Left ventricle myocardium inferior (tissue), 1 donor: ENCODE measurements at regions of chr9 and their contacts with region 1.

Region 1: GRCh38 chr9:131277910-131278701 is 1.8 kb upstream of the FAM78A start:
- DNase-seq: peak; percentile 89
- H3K4me3 ChIP-seq: peak overlapping the region; percentile 96
- H3K27ac ChIP-seq: peak overlapping the region; percentile 99
- H3K4me1 ChIP-seq: peaks cover 75% of the 10 kb centered on the region
- H3K27me3 ChIP-seq: peaks cover 21% of the 10 kb centered on the region
- CTCF ChIP-seq: no peak

Region 2: GRCh38 chr9:131253891-131254491 is 24.1 kb before region 1 on chr9:
- intact Hi-C with region 1: loop called (anchors 2 kb)
- DNase-seq: peak; percentile 77
- H3K4me3 ChIP-seq: no peak overlapping the region
- H3K27ac ChIP-seq: peak overlapping the region; percentile 87
- H3K4me1 ChIP-seq: peaks cover 58% of the 10 kb centered on the region
- H3K27me3 ChIP-seq: no peaks in the 10 kb centered on the region
- CTCF ChIP-seq: no peak